Esophagus muscularis mucosa (tissue), 4 donors: ENCODE measurements at regions of chr6 and their contacts with region 1.

Region 1: GRCh38 chr6:144582939-144583613 is 297.9 kb downstream of the UTRN start:
- DNase-seq: no peak
- H3K4me3 ChIP-seq: peak overlapping the region; percentile 26 to 48 (median 44)
- H3K27ac ChIP-seq: peak overlapping the region; percentile 14 to 50 (median 34)
- H3K4me1 ChIP-seq: peaks cover 24 to 40% (median 30%) of the 10 kb centered on the region in 4 donors
- H3K27me3 ChIP-seq: no peaks in the 10 kb centered on the region
- CTCF ChIP-seq: no peak
- EP300 ChIP-seq: no peak
- POLR2A ChIP-seq: no peak

Region 2: GRCh38 chr6:144931172-144932035 is 348.3 kb after region 1 on chr6:
- intact Hi-C with region 1: loop called (anchors 10 kb)
- DNase-seq: no peak
- H3K4me3 ChIP-seq: no peak overlapping the region
- H3K27ac ChIP-seq: no peak overlapping the region
- H3K4me1 ChIP-seq: peaks cover 0 to 25% (median 5%) of the 10 kb centered on the region in 4 donors
- H3K27me3 ChIP-seq: no peaks in the 10 kb centered on the region
- CTCF ChIP-seq: peak; percentile 44 to 70 (median 48)
- EP300 ChIP-seq: no peak
- POLR2A ChIP-seq: no peak

Region 3: DNA sequence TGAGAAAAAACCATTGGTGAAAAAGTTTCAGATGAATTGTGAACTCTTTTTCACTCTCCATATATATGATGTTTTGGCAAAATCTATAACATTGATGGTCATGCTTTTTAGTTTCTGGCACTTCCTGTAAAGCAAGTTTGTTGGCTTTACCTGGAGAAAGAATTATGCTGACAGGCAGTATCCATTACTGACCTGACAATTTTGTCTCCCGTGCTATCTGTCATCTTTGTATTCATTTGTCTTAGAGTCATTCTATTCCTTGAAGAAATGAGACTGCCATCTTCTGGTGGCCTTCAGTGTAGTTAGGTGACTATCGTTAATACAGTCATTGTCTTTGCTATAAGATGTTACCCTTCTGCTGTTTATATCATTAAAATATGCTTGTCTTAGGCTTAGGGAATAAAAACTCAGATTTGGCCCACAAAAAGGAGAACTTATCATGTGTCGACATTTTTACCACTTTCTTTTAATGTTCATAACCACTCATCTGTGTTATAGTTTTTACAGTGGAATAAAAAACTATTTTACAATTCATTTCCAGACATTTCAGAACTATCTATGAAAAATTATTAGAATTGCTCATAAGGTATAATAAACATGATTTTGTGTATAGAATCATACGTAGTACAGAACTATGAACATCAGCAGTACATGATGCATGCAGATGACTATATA is 445.2 kb after region 1 on chr6:
- intact Hi-C with region 1: loop called (anchors 10 kb)
- DNase-seq: no peak
- H3K4me3 ChIP-seq: no peak overlapping the region
- H3K27ac ChIP-seq: no peak overlapping the region
- H3K4me1 ChIP-seq: peaks cover 0 to 5% (median 2%) of the 10 kb centered on the region in 4 donors
- H3K27me3 ChIP-seq: no peaks in the 10 kb centered on the region
- CTCF ChIP-seq: peak; percentile 35 to 46 (median 42)
- EP300 ChIP-seq: no peak
- POLR2A ChIP-seq: no peak

Region 4: DNA sequence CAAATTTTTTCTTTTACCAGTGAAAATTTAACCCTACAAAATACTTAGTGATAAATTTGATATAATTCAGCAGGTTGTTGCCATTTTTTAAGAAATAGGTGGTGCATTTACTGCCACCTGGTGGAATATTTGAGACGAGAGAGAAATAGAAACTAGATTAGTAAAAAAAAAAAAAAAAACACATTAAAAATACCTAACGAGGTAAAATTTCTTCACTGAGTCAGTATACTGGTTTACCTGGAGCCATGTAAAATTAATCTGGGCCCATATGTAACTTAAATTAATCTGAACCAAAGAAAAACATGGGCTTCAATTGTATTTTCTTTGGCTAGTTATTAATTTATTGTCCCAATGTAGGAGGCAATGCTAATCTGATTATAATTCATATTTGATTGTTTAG is 631.5 kb after region 1 on chr6:
- intact Hi-C with region 1: loop called (anchors 5 kb)
- DNase-seq: no peak
- H3K4me3 ChIP-seq: no peak overlapping the region
- H3K27ac ChIP-seq: no peak overlapping the region
- H3K4me1 ChIP-seq: peaks cover 0 to 15% (median 3%) of the 10 kb centered on the region in 4 donors
- H3K27me3 ChIP-seq: no peaks in the 10 kb centered on the region
- CTCF ChIP-seq: peak; percentile 47 to 62 (median 60)
- EP300 ChIP-seq: no peak
- POLR2A ChIP-seq: no peak